Esophagus squamous epithelium (tissue), 5 donors: ENCODE measurements at regions of chr18 and their contacts with region 1.

Region 1: DNA sequence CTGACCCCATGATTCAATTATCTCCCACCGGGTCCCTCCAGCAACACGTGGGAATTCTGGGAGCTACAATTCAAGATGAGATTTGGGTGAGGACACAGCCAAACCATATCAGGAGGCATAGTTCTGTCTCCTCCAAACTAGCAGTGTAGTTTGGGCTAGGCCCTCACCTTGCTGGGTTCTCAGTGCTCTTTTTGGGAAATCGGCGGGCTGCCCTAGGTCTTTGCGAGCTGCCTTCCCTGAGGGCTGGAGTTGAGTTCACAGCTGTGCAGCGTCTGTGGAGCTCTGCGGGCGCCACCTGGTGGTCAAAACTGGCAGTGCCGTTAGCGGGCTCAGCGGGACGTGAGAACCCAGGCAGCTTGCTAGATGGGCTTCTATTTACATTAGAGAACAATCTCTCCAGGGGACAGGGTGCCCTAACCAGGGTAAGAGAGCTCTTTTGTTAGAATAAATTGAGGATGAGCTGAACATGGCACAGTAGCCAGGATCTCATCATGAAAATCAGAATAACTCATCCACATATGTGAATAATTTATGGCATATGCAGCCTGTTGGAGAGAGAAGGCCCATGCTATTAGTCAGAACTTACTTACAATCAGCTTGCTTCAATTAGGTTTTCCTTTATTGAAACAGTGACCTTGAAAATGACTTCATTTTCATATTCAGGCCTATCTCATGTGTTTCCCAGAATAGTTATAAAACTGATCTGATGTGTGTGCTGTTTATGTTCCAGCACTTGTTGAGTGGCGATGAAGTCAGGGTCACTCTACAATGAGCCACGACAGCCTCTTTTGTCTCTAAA is 27.4 kb upstream of the YES1 start:
- DNase-seq: no peak
- H3K4me3 ChIP-seq: no peak overlapping the region
- H3K27ac ChIP-seq: no peak overlapping the region
- H3K4me1 ChIP-seq: peaks cover 0 to 6% (median 3%) of the 10 kb centered on the region in 3 donors
- H3K27me3 ChIP-seq: peaks cover 0 to 12% (median 0%) of the 10 kb centered on the region in 4 donors
- CTCF ChIP-seq: peak; percentile 74 to 100 (median 93)
- POLR2A ChIP-seq: no peak

Region 2: GRCh38 chr18:525036-525797 is 314.2 kb before region 1 on chr18:
- intact Hi-C with region 1: no loop called
- DNase-seq: no peak
- H3K4me3 ChIP-seq: no peak overlapping the region
- H3K27ac ChIP-seq: no peak overlapping the region
- H3K4me1 ChIP-seq: no peaks in the 10 kb centered on the region
- H3K27me3 ChIP-seq: no peaks in the 10 kb centered on the region
- CTCF ChIP-seq: no peak
- POLR2A ChIP-seq: no peak

Region 3: GRCh38 chr18:629269-630150 is 209.9 kb before region 1 on chr18:
- intact Hi-C with region 1: loop called (anchors 5 kb)
- DNase-seq: no peak
- H3K4me3 ChIP-seq: no peak overlapping the region
- H3K27ac ChIP-seq: no peak overlapping the region
- H3K4me1 ChIP-seq: peaks cover 0 to 7% (median 3%) of the 10 kb centered on the region in 3 donors
- H3K27me3 ChIP-seq: no peaks in the 10 kb centered on the region
- CTCF ChIP-seq: peak in 1 of 6 experiments; percentile 22
- POLR2A ChIP-seq: no peak

Region 4: DNA sequence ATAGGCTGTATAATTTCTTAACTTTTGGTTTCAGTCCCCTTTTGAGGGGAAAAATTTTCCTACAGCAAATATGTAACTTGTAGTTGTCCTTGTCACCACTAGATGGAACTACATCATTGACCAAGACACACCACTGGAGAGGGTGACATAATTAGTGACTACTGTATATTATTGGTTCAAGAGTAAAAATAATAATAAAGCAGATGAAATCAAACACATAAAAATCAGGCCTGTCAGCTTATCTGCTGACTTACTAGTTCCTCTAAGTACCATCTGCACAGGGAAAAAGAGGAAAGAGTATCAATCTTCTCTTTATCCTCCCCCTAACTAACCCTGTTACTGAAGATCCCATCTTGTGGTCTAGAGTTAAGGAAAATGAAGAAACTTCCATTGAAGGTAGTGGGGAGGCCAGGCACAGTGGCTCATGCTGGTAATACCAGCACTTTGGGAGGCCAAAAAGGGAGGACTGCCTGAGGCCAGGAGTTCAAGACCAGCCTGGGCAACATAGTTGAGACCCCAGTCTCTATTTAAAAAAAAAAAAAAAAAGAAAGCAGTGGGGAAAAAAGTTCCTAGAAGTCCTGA is 97.4 kb before region 1 on chr18:
- intact Hi-C with region 1: loop called (anchors 5 kb)
- DNase-seq: no peak
- H3K4me3 ChIP-seq: no peak overlapping the region
- H3K27ac ChIP-seq: no peak overlapping the region
- H3K4me1 ChIP-seq: no peaks in the 10 kb centered on the region
- H3K27me3 ChIP-seq: no peaks in the 10 kb centered on the region
- CTCF ChIP-seq: peak; percentile 44 to 80 (median 70)
- POLR2A ChIP-seq: no peak

Region 5: DNA sequence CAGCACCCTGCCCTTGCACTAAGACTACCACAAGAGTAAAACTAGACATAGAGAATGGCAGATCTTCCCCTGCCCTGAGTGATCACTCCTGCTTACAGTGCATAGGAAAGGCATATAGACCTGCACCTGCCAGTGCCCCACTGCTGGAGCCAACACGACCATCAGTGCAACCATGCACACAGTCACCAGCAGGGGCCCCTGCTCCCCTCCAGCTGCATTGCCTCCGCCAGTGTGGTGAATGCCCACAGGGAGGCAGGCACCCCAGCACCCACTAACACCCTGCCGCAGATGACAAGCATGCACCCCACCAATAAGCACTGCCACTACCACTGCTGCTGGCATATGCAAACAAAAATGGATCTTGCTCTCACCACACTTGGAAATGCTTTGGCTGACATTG is 544.0 kb after region 1 on chr18:
- intact Hi-C with region 1: no loop called
- DNase-seq: no peak
- H3K4me3 ChIP-seq: no peak overlapping the region
- H3K27ac ChIP-seq: no peak overlapping the region
- H3K4me1 ChIP-seq: no peaks in the 10 kb centered on the region
- H3K27me3 ChIP-seq: no peaks in the 10 kb centered on the region
- CTCF ChIP-seq: no peak
- POLR2A ChIP-seq: no peak